ENCODE measurements at regions of chr11 and their contacts with region 1.

Region 1: DNA sequence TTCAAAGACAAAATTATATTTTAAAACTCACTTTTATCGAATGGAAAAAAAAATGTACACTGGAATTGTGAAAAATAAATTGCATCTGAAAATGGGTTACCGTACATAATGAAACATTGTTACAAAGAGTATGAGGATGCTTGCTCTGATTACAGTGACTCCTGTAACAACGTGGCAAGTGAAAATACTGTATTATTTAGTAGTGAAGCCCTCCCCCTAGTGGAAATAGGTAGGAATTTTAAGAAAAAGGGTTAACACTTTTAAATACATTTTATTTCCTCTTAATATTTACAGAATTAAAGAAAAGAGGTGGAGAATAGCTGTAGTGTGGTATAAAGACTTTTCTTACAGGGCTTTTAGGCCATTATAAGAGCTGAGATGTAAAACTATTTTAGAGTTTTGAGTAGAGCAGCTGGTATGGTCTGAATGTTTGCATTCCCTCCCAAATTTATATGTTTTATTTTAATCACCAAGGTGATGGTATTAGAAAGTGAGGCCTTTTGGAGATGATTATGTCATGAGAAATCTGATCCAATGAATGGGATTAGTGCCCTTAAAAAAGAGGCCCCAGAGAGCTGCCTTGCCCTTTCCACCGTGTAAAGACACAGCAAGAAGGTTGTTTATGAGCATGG is 25.2 kb downstream of the FAM76B start:
- DNase-seq: no peak
- H3K4me3 ChIP-seq: no peak overlapping the region
- H3K27ac ChIP-seq: no peak overlapping the region
- H3K4me1 ChIP-seq: no peaks in the 10 kb centered on the region
- H3K27me3 ChIP-seq: no peaks in the 10 kb centered on the region
- CTCF ChIP-seq: peak; percentile 39

Region 2: GRCh38 chr11:95055283-95055897 is 709.0 kb before region 1 on chr11:
- intact Hi-C with region 1: loop called (anchors 10 kb)
- DNase-seq: no peak
- H3K4me3 ChIP-seq: no peak overlapping the region
- H3K27ac ChIP-seq: no peak overlapping the region
- H3K4me1 ChIP-seq: no peaks in the 10 kb centered on the region
- H3K27me3 ChIP-seq: no peaks in the 10 kb centered on the region
- CTCF ChIP-seq: no peak

Region 3: GRCh38 chr11:95152876-95153856 is 611.2 kb before region 1 on chr11:
- intact Hi-C with region 1: loop called (anchors 2 kb)
- DNase-seq: no peak
- H3K4me3 ChIP-seq: peak overlapping the region; percentile 1
- H3K27ac ChIP-seq: no peak overlapping the region
- H3K4me1 ChIP-seq: peaks cover 3% of the 10 kb centered on the region
- H3K27me3 ChIP-seq: no peaks in the 10 kb centered on the region
- CTCF ChIP-seq: no peak

Region 4: DNA sequence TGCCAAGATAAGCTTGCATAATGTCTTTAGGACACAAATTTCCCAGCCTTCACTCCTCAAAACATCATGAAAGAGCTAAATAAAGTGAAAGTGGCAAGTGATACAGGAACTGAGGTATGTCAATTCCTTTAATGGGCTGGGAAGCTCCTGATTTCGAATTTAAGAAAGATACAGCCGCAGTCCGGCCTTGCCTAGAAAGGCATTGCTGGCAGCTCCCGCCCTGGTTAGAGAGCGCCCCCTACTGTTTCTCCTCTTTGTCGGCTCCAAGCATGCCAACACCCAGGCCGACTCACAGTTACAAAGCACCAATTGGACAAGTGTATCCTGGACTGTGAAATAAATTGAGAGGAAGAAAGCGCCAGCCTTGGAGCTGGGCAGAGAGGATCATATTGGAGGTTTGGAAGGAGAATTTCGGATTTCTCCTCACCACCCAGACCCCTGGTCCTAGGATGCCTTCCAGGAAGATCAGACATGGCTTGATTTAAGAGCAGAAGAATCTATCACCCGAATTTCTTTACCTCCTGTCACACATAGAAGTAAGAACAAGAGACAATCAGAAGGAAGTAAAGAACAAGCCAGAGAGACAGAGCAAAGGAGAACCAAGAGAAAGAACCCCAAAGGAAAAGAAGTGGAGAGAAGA is 58.8 kb before region 1 on chr11:
- intact Hi-C with region 1: loop called (anchors 5 kb)
- DNase-seq: peak; percentile 91
- H3K4me3 ChIP-seq: no peak overlapping the region
- H3K27ac ChIP-seq: no peak overlapping the region
- H3K4me1 ChIP-seq: no peaks in the 10 kb centered on the region
- H3K27me3 ChIP-seq: no peaks in the 10 kb centered on the region
- CTCF ChIP-seq: peak; percentile 92

Region 5: GRCh38 chr11:96014217-96014616 is 249.8 kb after region 1 on chr11:
- intact Hi-C with region 1: no loop called
- DNase-seq: no peak
- H3K4me3 ChIP-seq: no peak overlapping the region
- H3K27ac ChIP-seq: no peak overlapping the region
- H3K4me1 ChIP-seq: no peaks in the 10 kb centered on the region
- H3K27me3 ChIP-seq: no peaks in the 10 kb centered on the region
- CTCF ChIP-seq: no peak

Measured in colonic mucosa (tissue), 4 donors.